ENCODE measurements at regions of chr15 and their contacts with region 1.

Region 1: DNA sequence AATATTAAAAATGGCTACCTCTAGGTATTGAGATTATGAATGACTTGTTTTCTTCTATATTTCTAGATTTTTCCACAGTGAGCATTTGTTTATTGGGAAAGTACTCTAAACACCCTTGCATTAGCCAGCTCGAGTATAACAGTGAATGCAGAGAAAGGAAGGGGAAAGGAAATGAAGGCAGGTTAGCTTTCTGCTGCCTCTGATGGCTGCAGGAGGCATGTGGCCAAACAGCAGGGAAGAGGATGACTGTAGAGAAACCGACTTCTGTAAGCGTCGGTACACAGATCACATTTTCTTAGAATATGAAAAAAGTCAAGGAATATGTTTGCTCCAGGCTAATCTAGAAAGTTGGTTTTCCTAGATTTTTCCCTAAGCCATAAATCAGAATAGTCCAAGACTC is 19.8 kb downstream of the GNB5 start:
- DNase-seq: no peak
- H3K4me3 ChIP-seq: no peak overlapping the region
- H3K27ac ChIP-seq: no peak overlapping the region
- H3K4me1 ChIP-seq: no peaks in the 10 kb centered on the region
- H3K27me3 ChIP-seq: no peaks in the 10 kb centered on the region
- CTCF ChIP-seq: no peak
- POLR2A ChIP-seq: no peak

Region 2: GRCh38 chr15:52185151-52185561 is 13.8 kb after region 1 on chr15:
- intact Hi-C with region 1: loop called (anchors 1 kb)
- DNase-seq: no peak
- H3K4me3 ChIP-seq: no peak overlapping the region
- H3K27ac ChIP-seq: peak overlapping the region in 1 of 2 donors; percentile 27
- H3K4me1 ChIP-seq: peaks cover 3 to 5% of the 10 kb centered on the region in 2 donors
- H3K27me3 ChIP-seq: no peaks in the 10 kb centered on the region
- CTCF ChIP-seq: no peak
- POLR2A ChIP-seq: no peak